Posterior cingulate gyrus (tissue), 11 donors: ENCODE measurements at regions of chr2 and their contacts with region 1.

Region 1: GRCh38 chr2:27133905-27134780 is at the start of gene PREB:
- DNase-seq: peak; percentile 90 to 99 (median 96)

Region 2: DNA sequence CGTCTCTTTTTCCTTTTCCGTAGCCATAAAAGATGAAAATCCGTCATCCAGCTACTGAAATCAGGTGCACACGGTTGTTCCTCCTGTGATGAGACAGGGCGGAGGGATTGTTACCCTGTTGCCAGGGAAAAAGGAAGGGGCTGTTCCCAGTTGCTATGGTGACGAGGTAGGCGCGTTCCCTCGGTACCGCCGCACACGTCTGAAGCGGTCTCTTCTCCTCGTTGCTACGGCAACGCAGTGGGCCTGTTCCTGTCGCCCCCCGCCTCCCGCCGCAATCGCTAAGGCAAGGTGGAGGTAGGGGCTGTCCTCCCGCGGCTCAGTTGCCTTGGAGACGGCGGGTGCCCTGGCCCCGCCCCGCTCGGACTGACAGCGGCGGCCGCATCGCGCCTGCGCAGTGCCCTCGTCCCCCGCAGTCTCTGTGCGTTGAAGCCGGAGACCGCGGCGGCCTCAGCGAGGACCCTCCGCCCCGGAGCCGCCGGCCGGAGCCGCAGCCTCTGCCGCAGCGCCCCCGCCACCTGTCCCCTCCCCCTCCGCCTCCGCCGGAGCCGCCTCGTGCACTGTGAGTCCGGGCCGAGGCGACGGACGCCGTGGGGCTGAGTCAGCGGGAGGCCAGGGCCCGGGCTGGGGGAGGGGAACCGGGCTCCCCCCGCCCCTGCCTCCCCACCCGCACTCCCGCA is 163.8 kb before region 1 on chr2 and contains the start of gene MAPRE3:
- intact Hi-C with region 1: no loop called
- DNase-seq: peak; percentile 80 to 99 (median 92)

Region 3: GRCh38 chr2:27095745-27096651 is 38.1 kb before region 1 on chr2:
- intact Hi-C with region 1: no loop called
- DNase-seq: peak; percentile 66 to 96 (median 72)

Region 4: DNA sequence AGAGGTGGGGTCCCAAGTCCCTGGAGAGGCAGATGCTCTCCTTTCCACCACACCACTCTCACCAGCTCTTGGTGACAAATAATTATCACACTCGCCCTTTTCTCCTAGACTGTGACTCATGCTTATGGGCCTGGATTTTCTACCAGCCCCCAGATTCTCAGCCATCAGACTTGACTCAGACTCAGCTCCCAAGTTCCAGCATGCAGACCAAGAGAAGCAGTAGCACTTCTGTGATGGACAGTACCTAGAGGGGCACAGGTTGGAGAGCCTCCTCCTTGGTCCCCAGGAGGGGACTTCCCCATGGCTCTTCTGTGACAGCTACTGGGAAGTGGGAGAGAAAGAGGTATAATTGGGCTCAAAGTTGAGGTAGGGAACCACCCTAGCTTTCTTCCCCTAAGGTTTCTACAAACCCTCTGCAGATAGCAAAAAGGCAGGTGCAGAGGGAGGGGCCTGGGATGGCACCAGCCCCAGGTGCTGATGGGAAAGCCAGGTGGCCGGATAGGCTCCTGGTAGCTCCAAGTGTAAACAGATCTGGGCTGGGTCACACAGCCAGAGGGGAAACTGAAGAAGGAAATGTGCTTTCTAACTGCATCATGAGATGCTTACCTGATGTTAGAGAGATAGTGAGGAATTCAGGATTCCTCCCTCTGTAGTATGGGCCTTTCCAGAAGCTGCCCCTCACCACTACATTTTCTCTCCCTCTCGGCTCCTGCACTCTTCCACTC is 18.8 kb after region 1 on chr2:
- intact Hi-C with region 1: no loop called
- DNase-seq: peak in 1 of 10 donors; percentile 26

Region 5: GRCh38 chr2:27211829-27212627 is 77.9 kb after region 1 on chr2 and contains the starts of genes ATRAID and SLC5A6:
- intact Hi-C with region 1: loop called (anchors 5 kb)
- DNase-seq: peak; percentile 76 to 98 (median 88)